CD8-positive, alpha-beta memory T cell (primary cell): ENCODE measurements at regions of chr15 and their contacts with region 1.

Region 1: DNA sequence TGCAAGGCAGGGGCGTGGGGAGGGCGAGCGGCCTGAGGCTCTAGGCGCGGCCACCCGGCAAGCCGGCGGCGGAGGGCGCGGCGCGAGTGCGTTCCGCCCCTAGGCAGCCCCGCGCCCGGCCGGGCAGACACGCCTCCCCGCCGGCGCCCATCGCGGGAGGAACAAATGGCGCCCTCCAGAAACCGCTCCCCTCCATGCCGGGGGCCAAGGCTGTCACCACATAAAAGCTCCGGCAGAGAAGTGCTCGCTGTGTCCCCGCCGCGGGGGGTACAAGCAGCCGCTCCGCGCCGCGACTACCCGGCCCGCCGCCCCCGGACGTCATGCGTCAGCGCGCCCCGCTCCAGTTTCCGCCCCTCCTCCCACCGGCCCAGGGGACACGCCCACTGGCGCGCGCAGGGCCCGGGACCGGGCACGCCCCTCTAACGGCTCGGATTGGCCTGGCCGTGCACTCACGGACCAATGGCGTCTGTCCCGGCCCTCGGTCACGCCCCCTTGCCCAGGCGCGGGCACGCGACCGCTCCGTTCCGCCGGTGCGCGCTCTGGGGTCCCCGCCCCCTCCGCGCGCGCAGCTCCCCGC is 391 bp upstream of the KLF13 start:
- DNase-seq: peak; percentile 99 to 100 (median 100)
- H3K4me3 ChIP-seq: peak overlapping the region; percentile 52
- H3K4me3 Mint-ChIP-seq: peak overlapping the region; percentile 58 to 95 (median 87)
- H3K27ac ChIP-seq: peak overlapping the region; percentile 85
- H3K27ac Mint-ChIP-seq: peak overlapping the region; percentile 46 to 96 (median 76)
- H3K4me1 ChIP-seq: peaks cover 35% of the 10 kb centered on the region
- H3K4me1 Mint-ChIP-seq: peaks cover 37 to 65% (median 42%) of the 10 kb centered on the region in 3 donors
- H3K27me3 ChIP-seq: no peaks in the 10 kb centered on the region
- H3K27me3 Mint-ChIP-seq: peaks cover 0 to 2% of the 10 kb centered on the region in 2 donors

Region 2: DNA sequence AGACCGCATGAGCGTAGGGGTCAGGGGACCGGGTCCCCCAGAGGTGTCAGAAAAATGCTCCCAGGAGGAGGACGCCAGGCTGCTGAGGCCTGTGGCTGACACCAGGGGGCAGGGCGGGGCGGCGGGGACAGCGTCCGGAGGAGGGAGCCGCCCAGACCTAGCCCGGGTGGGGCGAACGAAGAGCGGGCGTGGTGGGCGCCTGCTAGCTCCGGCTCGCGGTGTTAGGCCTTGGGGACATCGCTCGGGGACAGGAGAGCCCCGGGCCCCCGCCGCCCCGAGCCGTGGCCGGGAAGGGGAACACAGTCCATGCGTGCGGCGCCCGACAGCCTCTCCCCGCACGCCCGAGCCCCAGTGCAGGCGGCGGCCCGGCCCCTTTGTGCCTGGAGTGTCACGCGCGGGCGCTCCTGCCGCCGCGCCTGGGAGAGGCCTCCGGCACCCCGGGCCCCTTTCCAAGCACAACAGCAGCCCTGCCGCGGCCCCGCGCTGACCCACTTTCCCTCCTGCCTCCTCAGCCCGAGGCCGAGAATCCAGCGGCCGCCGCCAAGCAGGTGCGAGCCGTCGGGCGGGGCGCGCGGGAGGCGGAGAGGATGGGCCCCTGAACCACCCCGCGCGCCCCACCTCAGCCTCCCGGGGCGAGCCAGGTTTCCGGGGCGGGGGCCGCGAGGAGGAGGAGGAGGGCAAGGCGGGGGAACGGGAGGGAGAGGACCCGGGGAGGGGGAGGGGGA is 110.6 kb before region 1 on chr15:
- CTCF ChIA-PET with region 1: interaction called, 13 read pairs
- POLR2A ChIA-PET with region 1: interaction called, 25 read pairs
- DNase-seq: peak; percentile 69 to 83 (median 73)
- H3K4me3 ChIP-seq: peak overlapping the region; percentile 22
- H3K4me3 Mint-ChIP-seq: peak overlapping the region; percentile 56 to 91 (median 71)
- H3K27ac ChIP-seq: peak overlapping the region; percentile 24
- H3K27ac Mint-ChIP-seq: peak overlapping the region in 7 of 8 donors; percentile 21 to 89 (median 72)
- H3K4me1 ChIP-seq: peaks cover 24% of the 10 kb centered on the region
- H3K4me1 Mint-ChIP-seq: peaks cover 19 to 28% (median 20%) of the 10 kb centered on the region in 3 donors
- H3K27me3 ChIP-seq: no peaks in the 10 kb centered on the region
- H3K27me3 Mint-ChIP-seq: no peaks in the 10 kb centered on the region

Region 3: DNA sequence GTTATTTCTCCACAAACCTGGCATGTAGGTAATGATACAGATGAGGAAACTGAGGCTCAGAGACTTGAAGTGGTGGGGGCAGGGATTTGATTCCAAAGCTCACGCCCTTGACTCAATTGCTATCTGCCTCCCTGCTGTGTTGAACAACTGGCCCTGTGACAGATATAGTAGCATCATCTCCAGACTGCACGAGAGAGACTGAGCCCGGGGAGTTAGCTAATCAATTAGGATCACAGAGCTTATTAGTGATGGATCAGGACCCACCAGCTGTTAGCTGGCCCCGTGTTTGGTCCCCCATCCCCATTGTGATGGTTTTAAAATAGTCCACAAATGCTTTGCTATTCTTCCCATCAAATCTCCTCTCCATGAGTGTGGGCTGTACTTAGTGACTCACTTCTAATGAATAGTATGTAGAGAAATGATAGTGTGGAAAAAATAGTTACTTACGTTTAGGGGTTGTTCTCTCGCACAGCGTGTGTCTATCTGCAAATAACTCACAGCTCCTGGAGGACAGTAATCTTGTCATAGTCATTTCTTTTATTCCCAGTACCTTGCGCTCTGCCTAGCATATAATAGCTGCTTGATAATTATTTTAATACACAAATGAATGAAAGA is 74.0 kb before region 1 on chr15:
- CTCF ChIA-PET with region 1: no interaction called
- POLR2A ChIA-PET with region 1: no interaction called
- DNase-seq: no peak
- H3K4me3 ChIP-seq: no peak overlapping the region
- H3K4me3 Mint-ChIP-seq: no peak overlapping the region
- H3K27ac ChIP-seq: no peak overlapping the region
- H3K27ac Mint-ChIP-seq: peak overlapping the region in 3 of 8 donors; percentile 6 to 69 (median 58)
- H3K4me1 ChIP-seq: peaks cover 15% of the 10 kb centered on the region
- H3K4me1 Mint-ChIP-seq: peaks cover 8 to 13% (median 11%) of the 10 kb centered on the region in 3 donors
- H3K27me3 ChIP-seq: no peaks in the 10 kb centered on the region
- H3K27me3 Mint-ChIP-seq: no peaks in the 10 kb centered on the region

Region 4: DNA sequence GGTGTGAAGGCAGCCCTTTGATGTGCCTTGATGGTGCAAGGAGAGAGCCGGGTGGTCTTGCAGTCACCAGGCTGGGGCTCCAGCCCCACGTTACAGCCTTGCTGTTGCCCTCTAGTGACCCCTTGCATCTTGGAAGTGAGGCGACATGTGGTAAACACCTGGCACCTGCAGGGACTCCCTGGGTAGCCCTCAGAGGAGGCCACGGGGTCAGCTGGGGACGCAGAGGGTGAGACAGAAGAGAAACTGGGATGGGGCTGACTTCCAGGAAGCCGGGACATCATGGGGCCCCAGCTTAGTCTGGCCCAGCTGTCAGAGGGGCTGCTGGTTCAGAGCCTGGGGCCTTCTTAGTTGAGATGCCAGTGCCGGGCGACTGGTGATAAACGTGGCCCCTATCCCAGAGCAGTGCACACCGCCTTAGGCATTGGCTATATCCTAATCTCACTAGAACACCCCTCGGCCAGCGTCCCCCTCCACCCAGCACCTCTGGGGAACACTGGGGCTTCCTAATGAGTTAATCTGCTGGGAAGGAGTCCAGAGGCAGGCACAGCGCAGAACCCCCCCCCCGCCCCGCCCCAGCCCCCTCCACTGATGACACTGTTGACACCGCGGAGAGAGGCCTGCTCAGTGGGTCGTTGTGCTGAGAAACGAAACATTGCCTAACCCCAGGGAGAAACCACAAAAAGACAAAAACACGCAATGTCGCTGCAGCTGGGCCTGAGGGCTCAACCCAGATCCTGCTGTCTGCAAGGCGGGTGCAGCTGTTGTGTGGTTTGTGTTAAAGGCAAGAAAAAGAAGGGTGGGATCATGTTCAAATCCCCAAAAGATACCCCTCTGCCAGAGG is 60.2 kb before region 1 on chr15:
- CTCF ChIA-PET with region 1: interaction called, 10 read pairs
- POLR2A ChIA-PET with region 1: interaction called, 44 read pairs
- DNase-seq: peak; percentile 36 to 87 (median 80)
- H3K4me3 ChIP-seq: peak overlapping the region; percentile 46
- H3K4me3 Mint-ChIP-seq: peak overlapping the region; percentile 24 to 85 (median 82)
- H3K27ac ChIP-seq: peak overlapping the region; percentile 46
- H3K27ac Mint-ChIP-seq: peak overlapping the region; percentile 84 to 99 (median 98)
- H3K4me1 ChIP-seq: peaks cover 82% of the 10 kb centered on the region
- H3K4me1 Mint-ChIP-seq: peaks cover 63 to 92% (median 86%) of the 10 kb centered on the region in 3 donors
- H3K27me3 ChIP-seq: no peaks in the 10 kb centered on the region
- H3K27me3 Mint-ChIP-seq: no peaks in the 10 kb centered on the region

Region 5: DNA sequence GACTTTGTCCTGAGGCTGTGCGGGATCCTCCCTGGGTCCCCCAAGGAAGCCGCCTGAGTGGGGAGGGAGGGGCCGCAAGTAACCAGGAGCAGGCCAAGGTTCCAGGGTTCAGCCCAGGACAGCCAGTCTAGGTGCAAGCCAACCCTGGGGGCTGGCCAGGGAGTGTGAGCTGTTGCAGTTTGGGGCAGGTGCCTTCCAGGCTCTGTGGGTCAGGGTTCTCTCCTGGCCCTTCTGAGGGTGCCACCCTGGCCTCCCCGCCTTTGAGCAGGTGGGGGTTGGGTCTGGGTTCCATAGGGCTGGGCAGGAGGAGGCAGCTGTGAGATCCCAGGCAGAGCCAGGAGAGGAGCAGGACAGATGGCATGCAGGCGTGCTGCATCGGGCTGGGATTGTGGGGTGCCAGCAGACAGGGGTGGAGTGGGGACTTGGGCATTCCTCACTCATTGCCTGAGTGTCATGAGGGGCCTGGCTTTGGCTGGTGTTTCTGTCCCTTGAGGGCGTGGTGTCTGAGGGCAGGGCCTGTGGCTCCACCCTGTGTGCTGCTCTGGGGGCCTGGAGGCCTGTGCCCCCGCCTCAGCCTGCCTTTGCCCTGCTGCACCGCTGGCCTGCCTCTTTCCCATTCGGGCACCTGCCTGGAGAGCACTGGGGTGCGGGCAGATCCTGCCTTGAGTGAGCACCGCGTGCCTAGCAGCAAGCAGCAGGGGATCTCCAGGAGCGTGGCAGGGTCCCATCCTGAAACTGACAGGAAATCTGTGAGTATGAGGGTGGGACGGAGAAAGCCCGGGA is 18.8 kb after region 1 on chr15:
- CTCF ChIA-PET with region 1: interaction called, 7 read pairs
- POLR2A ChIA-PET with region 1: interaction called, 20 read pairs
- DNase-seq: peak in 1 of 5 donors; percentile 60
- H3K4me3 ChIP-seq: peak overlapping the region; percentile 76
- H3K4me3 Mint-ChIP-seq: peak overlapping the region; percentile 81 to 96 (median 92)
- H3K27ac ChIP-seq: peak overlapping the region; percentile 75
- H3K27ac Mint-ChIP-seq: peak overlapping the region; percentile 90 to 99 (median 96)
- H3K4me1 ChIP-seq: peaks cover 100% of the 10 kb centered on the region
- H3K4me1 Mint-ChIP-seq: peaks cover 99 to 100% (median 100%) of the 10 kb centered on the region in 3 donors
- H3K27me3 ChIP-seq: no peaks in the 10 kb centered on the region
- H3K27me3 Mint-ChIP-seq: peaks cover 0 to under 1% of the 10 kb centered on the region in 2 donors

Region 6: DNA sequence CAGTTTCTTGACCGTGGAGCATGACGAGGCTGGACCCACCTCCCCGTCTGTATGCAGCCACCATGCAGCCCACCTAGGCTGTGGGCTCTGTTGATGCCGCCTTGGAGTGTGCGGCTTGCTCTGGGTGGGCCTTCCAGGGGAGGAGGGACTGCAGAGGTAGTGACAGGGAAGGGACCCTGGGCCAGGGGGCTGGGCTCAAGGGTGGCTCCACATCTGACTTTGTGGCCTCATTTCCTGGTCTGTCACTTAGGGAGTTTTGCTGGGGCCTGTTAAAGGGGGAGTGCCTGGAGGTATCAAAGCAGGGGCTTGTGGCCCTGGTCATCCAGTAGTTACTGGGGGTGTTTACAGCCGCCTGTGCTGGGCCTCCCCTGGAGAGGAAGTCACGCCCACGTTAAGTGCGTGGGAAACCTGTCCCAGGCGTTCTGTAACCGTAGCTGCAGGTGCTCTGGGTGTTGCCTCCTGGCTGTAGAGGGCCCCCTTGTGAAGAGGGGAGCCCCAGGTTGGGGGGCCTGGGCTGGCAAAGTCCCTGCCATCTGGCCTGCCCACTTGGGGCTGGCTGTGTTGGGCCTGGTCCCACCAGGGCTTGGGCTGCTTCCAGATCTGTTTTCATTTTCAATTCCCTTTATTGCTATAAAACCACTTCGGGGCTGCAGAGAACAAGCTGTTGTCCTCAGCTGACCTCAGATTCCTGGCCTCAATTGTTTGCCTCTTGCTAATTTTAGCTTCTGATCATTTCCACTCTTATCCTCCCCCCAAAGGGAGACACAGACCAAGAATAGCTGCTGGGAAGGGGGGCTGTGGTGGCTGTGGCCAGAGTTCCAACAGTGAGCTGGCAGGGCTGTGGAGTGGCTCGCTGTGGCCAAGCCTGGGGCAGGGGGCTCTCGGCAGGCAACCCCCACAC is 26.9 kb after region 1 on chr15:
- CTCF ChIA-PET with region 1: interaction called, 7 read pairs
- POLR2A ChIA-PET with region 1: interaction called, 20 read pairs
- DNase-seq: peak; percentile 37 to 71 (median 67)
- H3K4me3 ChIP-seq: peak overlapping the region; percentile 33
- H3K4me3 Mint-ChIP-seq: peak overlapping the region; percentile 73 to 87 (median 82)
- H3K27ac ChIP-seq: peak overlapping the region; percentile 67
- H3K27ac Mint-ChIP-seq: peak overlapping the region; percentile 90 to 98 (median 96)
- H3K4me1 ChIP-seq: peaks cover 100% of the 10 kb centered on the region
- H3K4me1 Mint-ChIP-seq: peaks cover 96 to 99% (median 98%) of the 10 kb centered on the region in 3 donors
- H3K27me3 ChIP-seq: no peaks in the 10 kb centered on the region
- H3K27me3 Mint-ChIP-seq: peaks cover 0 to 1% of the 10 kb centered on the region in 2 donors

Region 7: GRCh38 chr15:31391687-31392671 is 65.7 kb after region 1 on chr15:
- CTCF ChIA-PET with region 1: interaction called, 6 read pairs
- POLR2A ChIA-PET with region 1: interaction called, 23 read pairs
- DNase-seq: peak; percentile 78 to 91 (median 82)
- H3K4me3 ChIP-seq: peak overlapping the region; percentile 87
- H3K4me3 Mint-ChIP-seq: peak overlapping the region; percentile 87 to 98 (median 95)
- H3K27ac ChIP-seq: peak overlapping the region; percentile 73
- H3K27ac Mint-ChIP-seq: peak overlapping the region; percentile 82 to 99 (median 98)
- H3K4me1 ChIP-seq: peaks cover 33% of the 10 kb centered on the region
- H3K4me1 Mint-ChIP-seq: peaks cover 49 to 69% (median 57%) of the 10 kb centered on the region in 3 donors
- H3K27me3 ChIP-seq: no peaks in the 10 kb centered on the region
- H3K27me3 Mint-ChIP-seq: peaks cover 0 to 1% of the 10 kb centered on the region in 2 donors

Region 8: GRCh38 chr15:31455499-31455898 is 129.3 kb after region 1 on chr15:
- CTCF ChIA-PET with region 1: no interaction called
- POLR2A ChIA-PET with region 1: no interaction called
- DNase-seq: no peak
- H3K4me3 ChIP-seq: no peak overlapping the region
- H3K4me3 Mint-ChIP-seq: no peak overlapping the region
- H3K27ac ChIP-seq: no peak overlapping the region
- H3K27ac Mint-ChIP-seq: peak overlapping the region in 3 of 8 donors; percentile 39 to 86 (median 72)
- H3K4me1 ChIP-seq: peaks cover 10% of the 10 kb centered on the region
- H3K4me1 Mint-ChIP-seq: peaks cover 13 to 21% (median 20%) of the 10 kb centered on the region in 3 donors
- H3K27me3 ChIP-seq: no peaks in the 10 kb centered on the region
- H3K27me3 Mint-ChIP-seq: peaks cover 0 to 3% of the 10 kb centered on the region in 2 donors

Region 9: DNA sequence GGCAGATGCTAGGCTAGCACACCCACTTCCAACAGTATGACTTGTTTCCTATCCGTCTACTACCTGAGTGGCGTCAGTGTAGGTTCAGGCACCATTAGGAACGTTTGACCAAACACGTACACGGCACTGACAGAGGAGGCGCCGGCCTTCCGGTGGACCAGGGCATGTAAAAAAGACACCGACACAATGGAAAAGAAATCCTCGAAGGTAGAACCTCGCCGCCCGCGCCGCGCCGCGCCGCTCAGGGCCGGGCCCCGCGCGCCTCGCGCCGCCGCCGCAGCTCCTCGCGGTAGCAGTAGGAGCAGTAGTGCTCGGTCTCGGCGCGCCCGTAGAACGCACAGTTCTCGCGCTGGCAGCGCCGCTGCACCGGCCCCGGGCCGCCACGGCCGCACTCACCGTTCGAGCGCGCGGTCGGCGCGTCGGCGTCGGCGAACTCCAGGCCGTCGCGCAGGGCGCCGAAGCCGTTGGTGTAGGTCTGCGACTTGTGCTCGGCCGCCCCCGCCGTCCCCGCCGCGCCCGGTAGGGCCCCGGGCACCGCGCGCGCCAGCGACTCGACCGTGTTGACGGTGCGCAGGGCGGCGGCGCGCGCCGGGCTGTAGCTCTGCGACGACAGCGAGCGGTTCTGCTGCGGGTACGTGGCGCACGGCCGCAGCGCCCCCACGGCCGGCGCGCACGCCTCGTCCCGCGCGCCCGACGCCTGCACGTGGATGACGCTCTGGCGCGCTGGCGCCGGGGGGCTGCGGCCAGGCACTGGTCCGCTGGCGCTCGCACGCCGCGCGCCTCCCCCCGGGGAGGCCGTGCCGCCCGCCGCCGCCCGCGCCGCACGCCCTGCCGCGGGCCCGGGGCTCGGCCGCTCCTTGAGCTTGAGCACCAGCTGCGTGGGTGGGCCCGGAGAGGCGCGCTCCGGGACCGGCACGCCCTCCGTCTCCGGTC is 157.1 kb after region 1 on chr15:
- CTCF ChIA-PET with region 1: interaction called, 31 read pairs
- POLR2A ChIA-PET with region 1: interaction called, 16 read pairs
- DNase-seq: peak; percentile 23 to 70 (median 55)
- H3K4me3 ChIP-seq: peak overlapping the region; percentile 49
- H3K4me3 Mint-ChIP-seq: peak overlapping the region; percentile 91 to 98 (median 97)
- H3K27ac ChIP-seq: peak overlapping the region; percentile 24
- H3K27ac Mint-ChIP-seq: peak overlapping the region; percentile 70 to 96 (median 94)
- H3K4me1 ChIP-seq: peaks cover 36% of the 10 kb centered on the region
- H3K4me1 Mint-ChIP-seq: peaks cover 52 to 87% (median 69%) of the 10 kb centered on the region in 3 donors
- H3K27me3 ChIP-seq: no peaks in the 10 kb centered on the region
- H3K27me3 Mint-ChIP-seq: peaks cover 0 to 2% of the 10 kb centered on the region in 2 donors